PC-9 (cell line): ENCODE measurements at regions of chr11 and their contacts with region 1.

Region 1: GRCh38 chr11:44936525-44936924 is 14.2 kb downstream of the TP53I11 start:
- DNase-seq: peak; percentile 53 to 81
- H3K4me3 ChIP-seq: no peak overlapping the region
- H3K27ac ChIP-seq: no peak overlapping the region
- H3K4me1 ChIP-seq: no peaks in the 10 kb centered on the region
- H3K27me3 ChIP-seq: peaks cover 6% of the 10 kb centered on the region; the same call in 1 of the 2 replicates
- CTCF ChIP-seq: peak; percentile 96

Region 2: DNA sequence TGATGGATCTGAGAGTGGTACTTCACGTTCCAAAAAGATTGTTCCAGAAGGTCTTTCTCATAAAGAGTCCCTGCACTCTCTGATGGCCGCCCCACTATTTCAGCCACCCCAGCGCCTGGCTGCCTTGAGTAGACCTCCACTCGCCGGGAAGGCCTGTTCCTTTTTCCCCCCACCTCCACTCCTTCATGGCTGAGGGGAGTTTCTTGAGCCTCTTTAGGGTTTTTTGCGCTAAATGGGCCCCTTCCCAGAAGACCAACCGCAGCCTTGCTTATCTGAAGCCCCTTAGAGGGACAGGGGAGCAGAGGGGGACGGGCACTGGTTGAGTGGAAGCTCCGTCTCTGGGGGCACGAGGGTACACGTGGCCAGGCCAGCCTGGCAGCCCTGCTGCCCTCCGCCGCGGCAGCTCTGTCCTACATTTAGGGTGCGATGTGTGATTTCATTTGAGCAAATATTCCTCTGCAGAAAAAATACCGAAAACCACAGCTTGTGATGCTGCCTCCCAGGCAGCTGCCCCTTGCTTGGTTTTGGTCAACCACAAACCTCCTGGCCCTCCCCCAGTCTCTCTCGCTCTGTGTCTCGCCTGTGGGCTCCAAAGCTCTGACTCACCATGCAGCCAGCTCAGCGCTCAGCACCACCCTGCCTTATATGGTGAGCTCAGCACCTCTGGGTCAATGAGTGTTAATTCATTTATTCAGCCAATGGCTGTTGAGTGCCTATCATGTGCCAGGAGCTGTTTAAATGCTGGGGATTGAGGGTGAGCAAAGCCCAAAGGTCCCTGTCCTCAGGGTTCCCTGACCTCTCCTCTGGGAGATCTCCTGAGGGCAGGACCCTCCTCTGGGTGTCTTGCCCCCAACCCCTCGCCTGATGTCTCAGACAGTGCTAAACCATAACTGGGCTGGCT is 74.4 kb before region 1 on chr11:
- CTCF ChIA-PET with region 1: no interaction called
- POLR2A ChIA-PET with region 1: no interaction called
- intact Hi-C with region 1: no loop called
- DNase-seq: peak; percentile 78 to 96
- H3K4me3 ChIP-seq: peak overlapping the region; percentile 26; the same call in 1 of the 2 replicates
- H3K27ac ChIP-seq: peak overlapping the region; percentile 60
- H3K4me1 ChIP-seq: peaks cover 16% of the 10 kb centered on the region
- H3K27me3 ChIP-seq: peaks cover 34% of the 10 kb centered on the region; the same call in 1 of the 2 replicates
- CTCF ChIP-seq: no peak

Region 3: DNA sequence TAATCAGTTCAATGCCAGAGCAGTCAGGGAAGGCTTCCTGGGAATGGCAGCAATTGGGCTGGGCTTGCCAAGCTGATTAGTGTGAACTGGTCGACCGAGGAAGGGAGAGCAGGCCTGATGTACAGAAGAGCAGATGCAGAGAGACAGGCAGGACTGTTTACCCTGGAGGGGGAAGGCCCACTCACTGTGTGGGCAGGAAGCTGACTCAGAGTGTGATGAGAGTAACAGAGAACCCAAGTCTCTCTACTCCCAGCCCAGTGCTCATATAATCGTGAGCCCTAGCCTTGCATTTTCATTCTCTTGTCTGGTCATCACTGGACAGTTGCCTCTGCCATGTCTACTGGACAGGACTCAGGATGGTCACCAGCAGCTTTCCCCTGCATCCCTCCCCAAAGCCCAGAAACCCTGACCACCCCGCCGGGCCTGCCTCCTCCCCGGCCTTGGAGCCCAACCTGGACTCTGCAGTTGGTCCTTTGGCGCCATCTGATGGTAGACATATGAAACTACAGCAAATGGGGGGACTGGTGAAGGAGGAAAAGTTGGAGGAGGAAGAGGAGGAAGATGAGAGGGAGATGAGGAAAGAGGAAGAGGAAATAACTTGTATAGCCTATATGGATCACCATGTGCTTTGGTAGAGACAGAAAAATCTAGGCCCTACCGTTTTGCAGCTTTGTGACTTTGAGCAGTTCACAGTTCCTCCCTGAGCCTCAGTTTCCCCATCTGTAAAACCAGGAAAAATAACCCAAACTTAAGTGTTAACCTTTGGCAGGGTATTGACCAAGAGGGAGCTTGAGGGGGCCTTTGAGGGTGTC is 166.5 kb after region 1 on chr11:
- CTCF ChIA-PET with region 1: interaction called, 27 read pairs
- POLR2A ChIA-PET with region 1: no interaction called
- intact Hi-C with region 1: loop called (anchors 1 kb)
- DNase-seq: peak in 1 of 2 experiments; percentile 44
- H3K4me3 ChIP-seq: no peak overlapping the region
- H3K27ac ChIP-seq: no peak overlapping the region
- H3K4me1 ChIP-seq: no peaks in the 10 kb centered on the region
- H3K27me3 ChIP-seq: peaks cover 46% of the 10 kb centered on the region
- CTCF ChIP-seq: peak; percentile 99

Region 4: GRCh38 chr11:45332276-45332934 is 395.9 kb after region 1 on chr11:
- CTCF ChIA-PET with region 1: no interaction called
- POLR2A ChIA-PET with region 1: no interaction called
- intact Hi-C with region 1: loop called (anchors 1 kb)
- DNase-seq: peak in 1 of 2 experiments; percentile 10
- H3K4me3 ChIP-seq: no peak overlapping the region
- H3K27ac ChIP-seq: no peak overlapping the region
- H3K4me1 ChIP-seq: no peaks in the 10 kb centered on the region
- H3K27me3 ChIP-seq: peaks cover 72% of the 10 kb centered on the region
- CTCF ChIP-seq: peak; percentile 82